ENCODE measurements at regions of chr7 and their contacts with region 1.

Region 1: GRCh38 chr7:27196287-27196767 is 3.6 kb downstream of the HOXA13 start:
- DNase-seq: peak; percentile 37
- H3K4me3 ChIP-seq: no peak overlapping the region
- H3K27ac ChIP-seq: no peak overlapping the region
- H3K27me3 ChIP-seq: peaks cover 83% of the 10 kb centered on the region
- CTCF ChIP-seq: peak; percentile 80

Region 2: GRCh38 chr7:26760501-26760900 is 435.8 kb before region 1 on chr7:
- CTCF ChIA-PET with region 1: no interaction called
- POLR2A ChIA-PET with region 1: no interaction called
- DNase-seq: no peak
- H3K4me3 ChIP-seq: no peak overlapping the region
- H3K27ac ChIP-seq: no peak overlapping the region
- H3K27me3 ChIP-seq: no peaks in the 10 kb centered on the region
- CTCF ChIP-seq: no peak

Region 3: DNA sequence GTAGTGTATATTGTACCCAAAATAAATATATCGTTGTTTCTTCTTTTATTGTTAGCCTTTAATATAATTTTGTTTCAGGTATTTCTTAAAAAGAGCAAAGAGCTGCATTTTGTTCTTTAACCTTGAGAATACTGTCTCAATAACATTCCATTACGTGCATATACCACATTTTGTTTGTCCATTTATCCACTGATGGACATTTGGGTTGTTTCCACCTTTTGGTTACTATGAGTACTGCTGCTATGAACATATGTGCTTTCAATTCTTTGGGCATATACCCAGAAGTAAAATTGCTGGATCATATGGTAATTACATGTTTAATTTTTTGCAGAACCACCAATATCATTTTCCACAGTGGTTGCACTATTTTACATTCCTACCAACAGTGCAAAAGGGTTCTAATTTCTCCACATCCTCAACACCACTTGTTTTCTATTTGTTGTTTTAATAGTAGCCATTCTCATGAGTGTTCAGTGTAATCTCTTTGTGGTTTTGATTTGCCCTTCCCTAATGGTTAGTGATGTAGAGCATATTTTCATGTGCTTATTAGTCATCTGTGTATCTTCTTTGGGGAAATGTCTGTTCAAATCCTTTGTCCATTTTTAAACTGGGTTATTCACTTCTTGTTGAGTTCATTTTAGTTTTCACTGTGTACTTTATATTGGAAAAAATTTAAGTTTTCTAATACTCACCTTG is 364.4 kb after region 1 on chr7:
- CTCF ChIA-PET with region 1: interaction called, 3 read pairs
- POLR2A ChIA-PET with region 1: interaction called, 12 read pairs
- DNase-seq: peak; percentile 23
- H3K4me3 ChIP-seq: no peak overlapping the region
- H3K27ac ChIP-seq: no peak overlapping the region
- H3K27me3 ChIP-seq: no peaks in the 10 kb centered on the region
- CTCF ChIP-seq: peak; percentile 34; the same call in 1 of the 2 replicates

Region 4: GRCh38 chr7:27745064-27745583 is 548.8 kb after region 1 on chr7:
- CTCF ChIA-PET with region 1: interaction called, 12 read pairs
- POLR2A ChIA-PET with region 1: no interaction called
- DNase-seq: peak; percentile 51
- H3K4me3 ChIP-seq: peak overlapping the region; percentile 21; the same call in 1 of the 2 replicates
- H3K27ac ChIP-seq: peak overlapping the region; percentile 79
- H3K27me3 ChIP-seq: no peaks in the 10 kb centered on the region
- CTCF ChIP-seq: peak; percentile 80

Region 5: DNA sequence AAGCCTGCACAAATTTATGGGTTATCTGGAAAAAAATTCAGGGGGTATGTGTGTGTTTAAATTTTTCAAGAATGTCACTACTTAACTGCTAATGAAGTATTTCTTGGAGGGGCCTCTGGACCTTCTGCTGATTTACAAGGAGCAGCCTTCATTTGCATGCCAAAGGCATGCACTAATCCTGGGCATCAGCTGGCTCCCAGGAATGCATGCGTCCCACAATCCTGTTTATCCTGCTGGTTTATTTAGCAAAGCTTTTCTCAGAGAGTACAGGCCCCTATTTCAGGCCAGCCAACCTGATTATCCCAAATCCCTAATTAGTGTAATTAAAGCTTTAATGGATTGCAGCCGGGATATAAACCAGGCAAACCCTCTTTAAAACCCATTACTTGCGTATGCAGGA is 714.0 kb after region 1 on chr7:
- CTCF ChIA-PET with region 1: interaction called, 10 read pairs
- POLR2A ChIA-PET with region 1: no interaction called
- DNase-seq: no peak
- H3K4me3 ChIP-seq: no peak overlapping the region
- H3K27ac ChIP-seq: no peak overlapping the region
- H3K27me3 ChIP-seq: no peaks in the 10 kb centered on the region
- CTCF ChIP-seq: no peak

Region 6: DNA sequence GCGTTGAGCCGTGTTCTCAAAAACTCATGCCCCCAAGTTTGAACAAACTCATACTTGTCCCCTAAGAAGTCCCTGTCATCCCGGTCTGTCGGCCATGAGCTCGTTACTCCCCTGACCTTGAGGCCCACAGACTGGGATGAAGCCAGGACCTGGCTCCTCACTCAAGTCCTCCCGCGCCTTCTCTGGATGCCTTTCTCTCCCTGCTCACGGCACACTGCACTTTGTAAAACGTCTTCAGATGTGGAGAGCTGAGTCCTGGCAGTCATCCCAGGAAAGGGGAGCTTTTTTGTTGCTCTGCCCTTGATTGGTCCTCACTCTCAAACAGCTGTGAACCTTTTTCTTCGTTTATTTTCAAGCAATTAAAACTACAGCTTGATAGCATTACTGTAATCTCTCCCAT is 873.5 kb after region 1 on chr7:
- CTCF ChIA-PET with region 1: interaction called, 17 read pairs
- POLR2A ChIA-PET with region 1: no interaction called
- DNase-seq: no peak
- H3K4me3 ChIP-seq: no peak overlapping the region
- H3K27ac ChIP-seq: no peak overlapping the region
- H3K27me3 ChIP-seq: no peaks in the 10 kb centered on the region
- CTCF ChIP-seq: no peak

Region 7: GRCh38 chr7:28096713-28097112 is 900.4 kb after region 1 on chr7:
- CTCF ChIA-PET with region 1: interaction called, 34 read pairs
- POLR2A ChIA-PET with region 1: interaction called, 3 read pairs
- DNase-seq: peak; percentile 57
- H3K4me3 ChIP-seq: no peak overlapping the region
- H3K27ac ChIP-seq: no peak overlapping the region
- H3K27me3 ChIP-seq: no peaks in the 10 kb centered on the region
- CTCF ChIP-seq: peak; percentile 79